ENCODE measurements at regions of chr3 and their contacts with region 1.

Region 1: GRCh38 chr3:119819806-119820205 is 37.9 kb downstream of the NR1I2 start:
- DNase-seq: no peak
- ATAC-seq: no peak
- H3K4me3 Mint-ChIP-seq: no peak overlapping the region
- H3K27ac Mint-ChIP-seq: no peak overlapping the region
- H3K4me1 Mint-ChIP-seq: no peaks in the 10 kb centered on the region
- H3K27me3 Mint-ChIP-seq: no peaks in the 10 kb centered on the region

Region 2: GRCh38 chr3:120147072-120147871 is 327.5 kb after region 1 on chr3:
- CTCF ChIA-PET with region 1: interaction called, 4 read pairs
- POLR2A ChIA-PET with region 1: no interaction called
- intact Hi-C with region 1: loop called in 1 of 2 experiments (anchors 5 kb)
- DNase-seq: peak; percentile 65
- ATAC-seq: peak; percentile 57
- H3K4me3 Mint-ChIP-seq: no peak overlapping the region
- H3K27ac Mint-ChIP-seq: no peak overlapping the region
- H3K4me1 Mint-ChIP-seq: peaks cover 27% of the 10 kb centered on the region
- H3K27me3 Mint-ChIP-seq: no peaks in the 10 kb centered on the region

Region 3: GRCh38 chr3:120182724-120183524 is 363.1 kb after region 1 on chr3:
- CTCF ChIA-PET with region 1: no interaction called
- POLR2A ChIA-PET with region 1: no interaction called
- intact Hi-C with region 1: loop called in 1 of 2 experiments (anchors 5 kb)
- DNase-seq: peak; percentile 27
- ATAC-seq: peak; percentile 36
- H3K4me3 Mint-ChIP-seq: no peak overlapping the region
- H3K27ac Mint-ChIP-seq: no peak overlapping the region
- H3K4me1 Mint-ChIP-seq: no peaks in the 10 kb centered on the region
- H3K27me3 Mint-ChIP-seq: no peaks in the 10 kb centered on the region

Region 4: DNA sequence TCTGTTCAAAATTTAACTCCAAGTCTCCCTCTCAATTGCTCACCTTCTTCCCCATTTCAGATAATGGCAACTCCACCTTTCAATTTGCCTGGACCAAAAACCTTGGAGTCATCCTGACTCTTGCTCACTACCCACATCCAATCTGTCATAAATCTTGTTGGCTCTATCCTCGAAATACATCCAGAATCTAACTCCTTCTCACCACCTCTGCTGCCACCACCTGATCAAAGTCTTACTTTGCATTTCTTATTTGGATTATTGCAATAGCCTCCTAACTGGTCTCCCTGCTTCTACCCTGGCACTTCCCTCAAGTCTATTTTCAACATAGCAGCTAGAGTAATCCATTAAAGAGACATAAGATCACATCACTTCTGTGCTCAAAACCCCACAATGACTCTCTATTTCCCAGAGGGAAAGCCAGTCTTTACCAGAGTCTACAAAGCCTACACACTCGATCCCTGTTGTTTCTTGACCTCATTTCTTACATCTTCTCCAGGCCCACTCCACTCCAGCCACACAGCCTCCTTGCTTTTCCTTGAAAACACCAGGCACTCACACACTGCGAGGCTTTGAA is 378.6 kb after region 1 on chr3:
- CTCF ChIA-PET with region 1: interaction called, 3 read pairs
- POLR2A ChIA-PET with region 1: no interaction called
- intact Hi-C with region 1: loop called in 1 of 2 experiments (anchors 5 kb)
- DNase-seq: peak; percentile 13
- ATAC-seq: no peak
- H3K4me3 Mint-ChIP-seq: no peak overlapping the region
- H3K27ac Mint-ChIP-seq: no peak overlapping the region
- H3K4me1 Mint-ChIP-seq: no peaks in the 10 kb centered on the region
- H3K27me3 Mint-ChIP-seq: no peaks in the 10 kb centered on the region